ENCODE measurements at regions of chr7 and their contacts with region 1.

Region 1: DNA sequence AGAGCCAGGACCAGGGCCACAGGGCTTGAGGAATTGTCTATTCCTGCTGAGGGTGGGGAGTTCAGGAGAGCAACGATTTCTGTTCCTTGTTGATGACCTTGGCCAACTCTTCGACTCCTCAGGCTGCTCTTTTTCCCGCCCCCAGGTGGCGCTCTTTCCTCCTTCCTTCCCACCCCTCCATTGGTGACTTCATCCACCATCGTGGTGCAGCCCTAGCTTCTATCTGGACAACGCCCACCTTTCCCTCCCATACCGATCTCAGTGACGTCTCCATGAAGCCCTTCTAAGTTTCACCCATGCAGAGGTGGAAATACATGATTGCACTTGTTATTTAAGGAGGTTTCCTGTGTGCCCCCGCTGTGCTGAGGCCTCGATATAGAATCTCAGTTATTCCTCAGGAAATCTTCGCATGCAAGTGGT is 22.1 kb upstream of the CARD11 start:
- DNase-seq: peak; percentile 83
- ATAC-seq: peak; percentile 50
- H3K4me3 Mint-ChIP-seq: peak overlapping the region; percentile 65
- H3K27ac Mint-ChIP-seq: peak overlapping the region; percentile 89
- H3K4me1 Mint-ChIP-seq: peaks cover 87% of the 10 kb centered on the region
- H3K27me3 Mint-ChIP-seq: no peaks in the 10 kb centered on the region

Region 2: DNA sequence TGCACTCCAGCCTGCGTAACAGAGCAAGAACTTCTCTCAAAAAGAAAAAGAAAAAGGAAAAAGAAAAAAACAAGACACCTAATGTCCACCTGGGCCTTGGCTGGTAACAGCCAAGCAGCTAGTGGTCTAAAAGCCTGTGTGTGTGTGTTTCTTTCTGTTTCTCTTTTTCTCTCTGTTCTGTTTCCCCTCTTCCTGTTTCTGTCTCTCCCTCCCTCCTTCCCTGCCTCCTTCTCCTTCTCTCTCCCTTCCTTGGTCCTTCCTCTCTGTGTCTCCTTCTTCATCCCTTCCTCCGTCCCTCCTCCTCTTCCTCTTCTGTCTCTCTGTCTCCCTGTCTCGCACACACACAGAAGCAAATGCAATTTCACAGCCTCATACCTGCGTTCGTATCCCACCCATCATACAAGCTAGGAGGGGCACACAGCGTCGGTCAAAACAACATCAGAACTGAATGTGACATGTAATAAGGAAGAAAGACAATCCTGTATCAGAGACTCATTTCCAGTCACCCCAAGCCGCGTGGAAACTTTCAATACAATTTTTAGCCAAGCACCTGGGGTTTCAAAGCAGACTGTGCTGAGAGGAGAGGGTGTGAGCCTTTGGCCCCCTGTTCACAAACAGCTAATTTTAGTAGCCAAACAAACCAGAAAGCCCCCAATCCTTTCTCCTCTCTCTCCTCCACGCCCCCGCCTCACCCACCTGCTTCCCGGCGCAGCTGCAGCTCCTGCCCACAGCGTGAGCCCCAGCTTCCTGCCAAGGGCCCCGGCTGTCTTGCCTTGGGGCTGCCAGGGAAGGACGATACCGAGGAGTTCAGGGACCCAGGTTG is 171.4 kb before region 1 on chr7:
- CTCF ChIA-PET with region 1: interaction called, 31 read pairs
- POLR2A ChIA-PET with region 1: interaction called, 3 read pairs
- DNase-seq: peak; percentile 65
- ATAC-seq: peak; percentile 81
- H3K4me3 Mint-ChIP-seq: peak overlapping the region; percentile 78
- H3K27ac Mint-ChIP-seq: peak overlapping the region; percentile 96
- H3K4me1 Mint-ChIP-seq: peaks cover 29% of the 10 kb centered on the region
- H3K27me3 Mint-ChIP-seq: no peaks in the 10 kb centered on the region

Region 3: GRCh38 chr7:2971914-2972834 is 93.6 kb before region 1 on chr7:
- CTCF ChIA-PET with region 1: no interaction called
- POLR2A ChIA-PET with region 1: no interaction called
- DNase-seq: peak; percentile 56
- ATAC-seq: peak; percentile 66
- H3K4me3 Mint-ChIP-seq: peak overlapping the region; percentile 57
- H3K27ac Mint-ChIP-seq: no peak overlapping the region
- H3K4me1 Mint-ChIP-seq: peaks cover 25% of the 10 kb centered on the region
- H3K27me3 Mint-ChIP-seq: no peaks in the 10 kb centered on the region

Region 4: GRCh38 chr7:3042861-3043489 is 22.8 kb before region 1 on chr7:
- CTCF ChIA-PET with region 1: interaction called, 30 read pairs
- POLR2A ChIA-PET with region 1: interaction called, 3 read pairs
- DNase-seq: peak; percentile 87
- ATAC-seq: peak; percentile 85
- H3K4me3 Mint-ChIP-seq: peak overlapping the region; percentile 98
- H3K27ac Mint-ChIP-seq: peak overlapping the region; percentile 94
- H3K4me1 Mint-ChIP-seq: peaks cover 61% of the 10 kb centered on the region
- H3K27me3 Mint-ChIP-seq: no peaks in the 10 kb centered on the region

Region 5: GRCh38 chr7:3092468-3092867 is 26.7 kb after region 1 on chr7:
- CTCF ChIA-PET with region 1: interaction called, 169 read pairs
- POLR2A ChIA-PET with region 1: interaction called, 11 read pairs
- DNase-seq: peak; percentile 90
- ATAC-seq: peak; percentile 75
- H3K4me3 Mint-ChIP-seq: peak overlapping the region; percentile 57
- H3K27ac Mint-ChIP-seq: peak overlapping the region; percentile 98
- H3K4me1 Mint-ChIP-seq: peaks cover 79% of the 10 kb centered on the region
- H3K27me3 Mint-ChIP-seq: no peaks in the 10 kb centered on the region

Region 6: DNA sequence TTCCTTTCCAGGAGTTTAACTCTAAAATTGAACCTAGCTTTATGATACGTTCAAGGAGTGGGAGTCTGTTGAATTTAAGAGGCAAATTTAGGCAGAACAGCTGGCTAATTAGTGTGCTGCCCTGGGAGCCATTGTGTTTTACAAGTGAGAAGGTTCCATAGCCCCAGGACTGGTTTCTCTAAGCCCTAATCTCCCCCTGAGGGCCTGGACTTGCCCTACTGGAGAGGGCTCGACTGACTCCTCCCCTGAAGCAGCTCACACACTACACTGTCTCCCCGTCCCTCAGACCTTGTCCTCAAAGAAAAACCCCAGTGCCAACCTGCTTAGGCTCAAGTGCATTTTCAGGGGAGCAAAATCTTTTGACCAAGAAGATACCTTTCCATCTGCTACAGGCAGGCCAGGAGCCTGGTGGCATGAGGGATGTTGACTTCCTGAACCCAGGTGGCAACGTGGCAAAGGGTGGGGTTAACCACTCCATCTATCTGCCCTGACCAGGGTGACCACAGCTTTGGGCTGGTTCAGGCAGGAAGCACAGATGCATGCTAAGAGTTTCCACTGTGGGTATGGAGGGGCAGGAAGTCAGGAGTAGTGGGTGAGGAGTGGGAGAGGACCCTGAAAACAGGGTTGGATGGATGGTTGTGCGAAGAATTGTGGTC is 46.9 kb after region 1 on chr7:
- CTCF ChIA-PET with region 1: interaction called, 66 read pairs
- POLR2A ChIA-PET with region 1: interaction called, 4 read pairs
- DNase-seq: peak; percentile 79
- ATAC-seq: peak; percentile 75
- H3K4me3 Mint-ChIP-seq: peak overlapping the region; percentile 32
- H3K27ac Mint-ChIP-seq: peak overlapping the region; percentile 81
- H3K4me1 Mint-ChIP-seq: peaks cover 95% of the 10 kb centered on the region
- H3K27me3 Mint-ChIP-seq: no peaks in the 10 kb centered on the region

Region 7: DNA sequence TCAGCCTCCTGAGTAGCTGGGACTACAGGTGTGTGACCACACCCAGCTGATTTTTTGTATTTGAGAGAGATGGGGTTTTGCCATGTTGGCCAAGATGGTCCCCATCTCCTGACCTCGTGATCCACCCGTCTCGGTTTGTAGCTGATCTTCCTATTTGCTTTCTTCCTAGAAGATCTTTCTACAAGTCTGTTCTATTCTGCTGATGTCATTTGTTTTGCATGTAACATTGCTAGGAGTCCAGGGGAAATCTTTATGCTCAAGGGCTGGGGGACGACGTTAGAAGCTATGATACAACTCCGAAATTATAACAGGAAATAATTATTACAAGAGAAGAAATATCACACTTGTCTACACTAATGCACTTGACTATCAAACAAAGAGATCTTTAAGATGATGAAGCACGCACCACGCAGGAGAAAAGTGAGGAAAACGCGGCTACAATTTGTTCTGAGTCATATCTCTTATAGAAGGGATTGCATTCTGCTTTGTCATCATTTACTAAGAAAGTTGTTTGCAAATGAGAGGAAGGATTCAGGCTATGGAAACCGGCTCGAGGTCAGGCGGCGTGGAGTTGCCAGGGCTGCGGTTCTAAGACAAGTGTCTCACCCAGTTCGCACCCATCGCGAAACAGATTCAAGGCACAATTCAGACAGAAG is 81.0 kb after region 1 on chr7:
- CTCF ChIA-PET with region 1: interaction called, 10 read pairs
- POLR2A ChIA-PET with region 1: no interaction called
- DNase-seq: no peak
- ATAC-seq: no peak
- H3K4me3 Mint-ChIP-seq: no peak overlapping the region
- H3K27ac Mint-ChIP-seq: no peak overlapping the region
- H3K4me1 Mint-ChIP-seq: peaks cover 18% of the 10 kb centered on the region
- H3K27me3 Mint-ChIP-seq: no peaks in the 10 kb centered on the region